Cardiac septum (tissue), 1 donor: ENCODE measurements at regions of chrX and their contacts with region 1.

Region 1: DNA sequence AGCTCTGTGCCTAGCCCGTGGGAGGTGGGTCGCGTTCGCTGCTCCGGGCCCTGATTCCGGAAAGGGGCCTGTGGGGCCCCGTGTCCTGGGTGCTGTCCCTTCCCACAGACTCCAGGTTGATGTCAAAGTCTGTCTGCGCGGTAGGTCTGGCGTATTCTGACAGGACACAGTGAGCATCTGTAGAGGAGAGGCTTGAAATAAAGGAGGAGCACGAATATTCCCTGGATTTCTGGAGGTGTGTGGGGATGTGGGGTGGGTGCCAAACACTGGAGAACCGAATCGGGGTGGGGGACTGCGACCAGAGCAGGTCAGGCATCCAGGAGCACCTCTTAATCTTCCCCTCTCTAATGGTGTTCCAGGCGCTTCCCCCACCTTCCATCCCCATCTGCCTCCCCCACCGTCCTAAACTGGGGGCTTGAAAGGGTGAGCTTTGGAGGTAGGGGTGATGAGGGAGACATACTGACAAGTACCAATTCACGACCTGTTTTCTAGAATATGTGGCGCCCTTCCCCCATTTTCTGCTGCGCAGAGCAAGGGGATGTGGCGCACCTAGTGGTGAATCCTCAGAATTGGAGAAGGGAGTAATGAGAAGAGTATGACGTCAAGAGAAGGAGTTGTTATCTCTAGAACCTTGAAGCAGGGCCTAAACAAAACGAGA is 877 bp downstream of the GPRASP1 start:
- DNase-seq: no peak

Region 2: GRCh38 chrX:102712952-102713625 is 60.9 kb after region 1 on chrX:
- intact Hi-C with region 1: loop called (anchors 5 kb)
- DNase-seq: no peak